ENCODE measurements at regions of chr10 and their contacts with region 1.

Region 1: GRCh38 chr10:5692461-5693358 is 8.1 kb downstream of the TASOR2 start:
- DNase-seq: peak; percentile 87
- H3K4me3 ChIP-seq: peak overlapping the region; percentile 70
- H3K27ac ChIP-seq: peak overlapping the region; percentile 92
- H3K4me1 ChIP-seq: peaks cover 91% of the 10 kb centered on the region
- CTCF ChIP-seq: no peak

Region 2: DNA sequence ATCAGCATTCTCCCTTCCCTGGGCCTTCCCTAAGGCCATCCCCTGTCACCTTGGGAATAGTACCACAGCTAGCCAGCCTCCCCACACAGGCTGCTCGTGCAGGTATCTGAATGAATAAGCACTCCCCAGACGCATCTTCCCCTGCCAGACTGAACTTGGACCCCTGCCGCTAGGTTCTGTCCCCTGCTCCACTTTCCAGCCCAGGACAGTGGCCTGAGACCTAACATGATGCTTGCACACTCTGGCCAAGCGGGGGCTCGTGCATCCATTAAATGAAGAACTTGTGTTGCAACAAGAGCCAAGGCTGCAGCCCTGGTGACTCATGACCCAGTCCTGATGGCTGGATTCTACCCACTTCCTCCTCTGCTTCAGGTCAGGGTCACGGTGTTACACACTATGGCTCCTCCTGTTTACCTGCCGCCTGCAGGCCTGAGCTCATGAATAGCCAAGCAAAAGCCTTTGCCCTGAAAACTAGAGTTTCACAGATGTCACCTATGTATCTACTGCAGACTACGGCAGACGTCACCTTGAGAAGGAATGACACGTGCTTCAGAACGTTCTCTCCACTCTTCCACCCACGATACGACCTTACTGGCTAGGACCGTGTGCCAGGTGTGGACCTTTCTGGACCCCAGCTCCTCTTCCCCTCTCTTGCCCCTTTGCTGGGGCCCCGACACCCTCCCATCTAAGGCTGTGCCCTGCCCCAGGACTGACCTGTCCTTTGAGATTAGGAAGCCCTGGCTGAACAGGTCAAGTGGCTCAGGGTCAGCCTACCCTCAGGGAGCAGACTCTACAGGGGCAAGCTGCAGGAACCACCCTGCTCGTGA is 32.8 kb before region 1 on chr10:
- CTCF ChIA-PET with region 1: interaction called, 7 read pairs
- POLR2A ChIA-PET with region 1: interaction called, 142 read pairs
- intact Hi-C with region 1: loop called (anchors 2 kb)
- DNase-seq: peak; percentile 83
- H3K4me3 ChIP-seq: peak overlapping the region; percentile 30
- H3K27ac ChIP-seq: peak overlapping the region; percentile 100
- H3K4me1 ChIP-seq: peaks cover 98% of the 10 kb centered on the region
- CTCF ChIP-seq: no peak

Region 3: DNA sequence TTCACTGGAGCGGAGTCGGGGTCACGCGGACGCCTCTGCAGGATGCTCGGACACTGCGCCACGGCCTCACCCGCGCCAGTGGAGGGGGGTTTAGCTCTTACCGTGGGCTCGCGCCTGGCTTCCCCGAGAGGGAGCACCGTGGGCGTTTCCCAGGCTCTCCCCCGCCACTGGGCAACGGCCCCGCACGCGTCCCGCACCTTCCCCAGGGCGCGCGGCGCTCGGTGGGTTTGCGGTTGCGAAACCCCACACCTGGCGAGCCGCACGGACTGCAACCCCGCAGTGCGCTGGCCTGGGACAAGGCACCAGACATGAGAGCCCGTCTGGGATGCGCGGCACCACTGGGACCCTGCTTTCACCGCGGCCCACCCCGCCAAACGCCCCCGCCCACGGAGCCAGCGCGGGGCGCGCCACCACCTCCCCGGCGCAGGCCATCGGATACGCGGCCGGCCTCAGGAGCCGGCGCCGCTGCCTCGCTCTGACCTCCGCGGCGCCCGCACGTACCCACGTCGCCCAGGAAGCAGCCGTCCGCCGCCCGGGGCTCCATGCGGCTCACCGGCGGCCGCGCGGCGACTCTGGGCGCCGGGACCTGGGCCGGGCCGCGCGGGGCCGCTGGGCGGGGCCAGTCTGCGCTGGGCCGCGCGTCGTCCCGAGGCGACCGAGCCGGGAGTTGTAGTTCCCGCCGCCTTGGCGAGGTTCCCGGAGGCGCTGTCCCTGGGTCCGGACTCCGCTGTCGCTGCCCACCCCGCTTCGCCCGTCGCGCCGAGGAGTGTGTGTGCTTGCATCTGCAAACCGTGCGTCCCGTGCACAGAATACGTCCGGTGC is 26.5 kb before region 1 on chr10 and contains the start of gene ASB13:
- CTCF ChIA-PET with region 1: interaction called, 7 read pairs
- POLR2A ChIA-PET with region 1: interaction called, 142 read pairs
- intact Hi-C with region 1: no loop called
- DNase-seq: peak; percentile 55
- H3K4me3 ChIP-seq: peak within 1 kb of the TSS; percentile 78
- H3K27ac ChIP-seq: peak within 1 kb of the TSS; percentile 100
- H3K4me1 ChIP-seq: peaks cover 80% of the 10 kb centered on the region
- CTCF ChIP-seq: 0 out of 2 replicates have a peak, but pooled peaks have one; percentile 21
- total RNA-seq, gene ASB13: 23.2 and 25.6 TPM in 2 replicates

Region 4: DNA sequence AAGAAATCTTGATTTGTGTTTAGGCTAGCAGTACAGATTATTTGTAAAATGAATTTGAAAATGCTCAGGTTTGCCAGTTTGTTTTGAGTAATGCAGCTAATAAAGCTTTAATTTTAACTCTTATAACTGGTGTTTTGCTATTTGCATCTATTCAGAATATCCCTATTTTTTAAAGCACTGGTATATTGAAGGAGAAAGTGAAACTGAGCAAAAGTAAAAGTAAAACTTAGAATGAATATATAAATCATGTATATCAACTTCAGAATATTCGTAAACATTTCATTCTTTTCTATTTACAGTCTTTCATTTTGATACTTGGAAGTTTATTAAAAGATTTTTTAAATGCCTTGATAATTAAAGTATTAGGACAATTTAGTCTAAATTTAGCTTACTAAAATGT is 18.1 kb after region 1 on chr10:
- CTCF ChIA-PET with region 1: no interaction called
- POLR2A ChIA-PET with region 1: interaction called, 45 read pairs
- intact Hi-C with region 1: no loop called
- DNase-seq: no peak
- H3K4me3 ChIP-seq: no peak overlapping the region
- H3K27ac ChIP-seq: no peak overlapping the region
- H3K4me1 ChIP-seq: peaks cover 80% of the 10 kb centered on the region
- CTCF ChIP-seq: no peak